Activated CD4-positive, alpha-beta memory T cell treated with anti-CD3 and anti-CD28 coated beads for 36 hours (primary cell): ENCODE measurements at regions of chr10 and their contacts with region 1.

Region 1: DNA sequence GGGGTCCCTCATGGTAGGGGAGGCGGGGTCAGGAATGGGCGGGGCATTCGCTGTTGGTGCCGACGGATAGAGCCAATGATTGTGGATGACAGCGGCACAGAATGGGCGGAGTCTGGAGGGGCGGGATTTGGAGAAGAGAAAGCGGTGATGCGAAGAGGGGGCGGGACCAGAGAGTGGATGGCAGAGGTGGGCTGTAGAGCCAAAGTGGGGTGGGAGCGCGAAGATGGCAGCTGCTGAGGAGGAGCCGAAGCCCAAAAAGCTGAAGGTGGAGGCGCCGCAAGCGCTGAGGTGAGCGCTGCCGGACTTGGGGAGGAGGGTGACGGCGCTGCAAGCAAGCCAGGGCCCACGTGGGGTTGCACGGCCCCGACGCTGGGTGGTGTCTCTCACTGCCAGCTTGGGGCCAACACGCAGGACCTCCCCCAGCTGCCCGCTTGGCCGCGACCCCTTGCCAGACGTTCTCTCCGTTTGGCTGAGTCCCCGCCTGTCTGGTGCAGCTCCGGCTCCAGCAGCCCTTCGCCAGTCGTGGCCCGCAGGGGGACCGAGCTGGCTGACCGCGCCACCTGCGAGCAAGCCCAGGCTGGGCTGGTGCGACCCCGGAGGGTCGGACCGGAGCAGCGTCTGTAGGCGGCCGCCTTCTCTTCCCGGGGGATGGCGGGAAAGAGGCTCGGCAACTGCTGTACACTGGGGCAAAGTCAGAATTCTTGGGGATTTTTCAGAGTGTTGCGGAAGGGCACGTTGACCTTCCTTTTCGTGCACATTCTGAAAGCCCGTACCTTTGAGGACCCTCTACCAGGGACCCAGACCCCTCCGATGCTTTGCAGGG is at the start of gene ADK:
- DNase-seq: peak; percentile 100
- H3K4me3 Mint-ChIP-seq: no peak within 1 kb of the TSS
- H3K27ac Mint-ChIP-seq: no peak within 1 kb of the TSS
- H3K4me1 Mint-ChIP-seq: peaks cover 39% of the 10 kb centered on the region
- H3K27me3 Mint-ChIP-seq: no peaks in the 10 kb centered on the region
- total RNA-seq, gene ADK: 52.8 to 54.4 TPM

Region 2: DNA sequence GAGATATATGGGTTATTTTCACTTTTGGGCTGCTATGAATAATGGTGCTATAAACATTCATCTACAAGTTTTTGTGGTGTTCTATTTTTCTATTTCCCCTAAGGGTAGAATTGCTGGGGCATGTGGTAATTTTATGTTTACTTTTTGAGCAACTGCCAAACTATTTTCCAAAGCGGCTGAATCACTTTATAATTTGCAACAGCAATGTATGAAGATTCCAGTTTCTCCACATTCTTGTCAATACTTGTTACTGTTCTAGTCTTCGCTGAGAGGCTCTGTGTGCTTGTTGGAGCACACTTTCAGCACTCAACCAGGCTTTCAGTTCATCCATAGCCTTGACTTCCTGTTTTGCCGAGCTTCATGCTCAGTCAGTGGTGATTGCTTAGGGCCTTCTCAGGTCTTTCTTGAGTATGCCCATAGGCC is 38.7 kb after region 1 on chr10:
- CTCF ChIA-PET with region 1: no interaction called
- POLR2A ChIA-PET with region 1: no interaction called
- intact Hi-C with region 1: loop called (anchors 1 kb)
- DNase-seq: peak; percentile 27
- H3K4me3 Mint-ChIP-seq: peak overlapping the region; percentile 17
- H3K27ac Mint-ChIP-seq: peak overlapping the region; percentile 85
- H3K4me1 Mint-ChIP-seq: peaks cover 54% of the 10 kb centered on the region
- H3K27me3 Mint-ChIP-seq: no peaks in the 10 kb centered on the region

Region 3: GRCh38 chr10:74234569-74234968 is 83.3 kb after region 1 on chr10:
- CTCF ChIA-PET with region 1: interaction called, 5 read pairs
- POLR2A ChIA-PET with region 1: no interaction called
- intact Hi-C with region 1: loop called (anchors 1 kb)
- DNase-seq: no peak
- H3K4me3 Mint-ChIP-seq: no peak overlapping the region
- H3K27ac Mint-ChIP-seq: no peak overlapping the region
- H3K4me1 Mint-ChIP-seq: peaks cover 4% of the 10 kb centered on the region
- H3K27me3 Mint-ChIP-seq: no peaks in the 10 kb centered on the region

Region 4: GRCh38 chr10:74293686-74294371 is 142.6 kb after region 1 on chr10:
- CTCF ChIA-PET with region 1: no interaction called
- POLR2A ChIA-PET with region 1: no interaction called
- intact Hi-C with region 1: no loop called
- DNase-seq: no peak
- H3K4me3 Mint-ChIP-seq: no peak overlapping the region
- H3K27ac Mint-ChIP-seq: no peak overlapping the region
- H3K4me1 Mint-ChIP-seq: peaks cover 8% of the 10 kb centered on the region
- H3K27me3 Mint-ChIP-seq: no peaks in the 10 kb centered on the region